CD4-positive, alpha-beta memory T cell (primary cell): ENCODE measurements at regions of chr19 and their contacts with region 1.

Region 1: DNA sequence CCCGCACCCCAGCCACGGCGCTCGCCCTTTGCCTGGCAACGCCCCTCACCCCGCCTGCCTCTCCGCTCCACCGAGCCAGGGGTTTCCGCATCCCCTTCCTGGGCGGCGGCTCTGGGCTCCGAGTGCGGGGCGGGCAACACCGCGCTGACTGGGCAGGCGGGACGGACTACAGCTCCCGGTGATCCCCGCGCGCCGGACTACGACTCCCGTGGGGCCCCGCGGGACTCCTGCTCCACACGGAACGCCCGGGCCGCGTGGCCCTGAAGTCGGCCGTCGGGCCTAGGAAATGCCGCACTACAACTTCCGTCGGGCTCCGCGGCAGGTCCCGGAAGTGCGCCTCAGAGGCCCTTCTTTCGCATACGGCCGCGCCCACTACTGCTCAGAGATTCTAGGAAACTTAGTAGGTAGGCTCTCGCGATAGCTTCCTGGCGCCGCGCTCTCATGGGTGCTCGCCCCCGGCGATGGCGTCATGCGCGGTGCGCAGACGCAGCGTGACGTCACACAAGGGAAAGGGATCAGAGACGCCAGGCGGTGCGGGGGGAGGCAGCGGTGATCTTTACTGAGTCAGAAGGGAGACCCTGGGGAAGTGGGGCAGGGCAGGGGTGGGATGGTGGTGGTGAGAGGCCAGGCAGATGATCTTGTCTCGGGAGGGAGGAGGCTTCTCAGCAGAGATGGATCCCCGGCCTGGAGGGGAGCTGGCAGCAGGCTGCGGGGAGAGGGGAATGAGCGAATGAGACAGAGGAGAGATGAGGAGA is at the start of gene JOSD2:
- DNase-seq: peak; percentile 94 to 99 (median 98)
- H3K4me3 ChIP-seq: peak within 1 kb of the TSS; percentile 61 to 83
- H3K4me3 Mint-ChIP-seq: peak within 1 kb of the TSS; percentile 89 to 97 (median 92)
- H3K27ac ChIP-seq: peak within 1 kb of the TSS; percentile 78
- H3K27ac Mint-ChIP-seq: peak within 1 kb of the TSS; percentile 97 to 99 (median 99)
- H3K4me1 ChIP-seq: peaks cover 13% of the 10 kb centered on the region
- H3K4me1 Mint-ChIP-seq: peaks cover 7 to 32% (median 20%) of the 10 kb centered on the region in 4 donors
- H3K27me3 ChIP-seq: no peaks in the 10 kb centered on the region
- H3K27me3 Mint-ChIP-seq: peaks cover 0 to 9% of the 10 kb centered on the region in 2 donors
- total RNA-seq, gene JOSD2: 29.5 to 35.8 TPM

Region 2: DNA sequence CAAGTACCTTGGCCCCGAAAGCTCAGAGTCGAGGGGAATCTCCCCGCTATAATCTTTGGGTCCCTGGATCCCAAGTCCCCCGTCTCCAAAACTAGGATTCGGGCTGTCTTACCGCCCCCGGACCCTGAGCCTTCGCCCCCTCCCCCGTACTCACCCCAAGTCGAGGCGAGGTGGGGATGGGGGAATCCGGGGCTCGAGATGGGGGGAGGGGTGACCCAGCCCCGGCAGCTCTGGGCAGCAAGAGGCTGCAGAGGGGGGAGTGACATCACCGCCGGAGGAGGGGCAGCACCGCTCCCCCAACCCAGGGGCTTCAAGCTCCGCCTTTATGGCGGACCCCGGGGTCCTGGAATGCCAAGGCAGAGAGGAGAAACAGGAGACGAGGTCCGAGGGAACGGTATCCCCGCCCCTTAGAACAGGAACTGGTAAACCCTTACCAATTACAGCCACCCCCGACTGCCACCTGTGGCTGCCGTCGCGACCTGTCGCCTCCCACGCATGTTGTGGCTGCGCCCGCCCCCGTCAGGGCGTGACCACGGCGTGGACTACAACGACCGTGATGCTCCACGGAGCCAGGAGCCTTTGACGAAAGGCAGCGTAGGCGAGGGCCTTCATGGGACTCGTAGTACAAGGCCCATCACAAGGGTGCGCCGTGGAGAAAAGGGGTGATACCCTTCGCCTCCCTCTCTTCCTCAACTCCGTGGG is 178.1 kb before region 1 on chr19:
- CTCF ChIA-PET with region 1: no interaction called
- POLR2A ChIA-PET with region 1: interaction called, 13 read pairs
- intact Hi-C with region 1: loop called (anchors 1 kb)
- DNase-seq: peak in 4 of 5 donors; percentile 88 to 94 (median 92)
- H3K4me3 ChIP-seq: peak overlapping the region; percentile 67 to 76
- H3K4me3 Mint-ChIP-seq: peak overlapping the region; percentile 82 to 97 (median 92)
- H3K27ac ChIP-seq: peak overlapping the region; percentile 3
- H3K27ac Mint-ChIP-seq: peak overlapping the region; percentile 69 to 98 (median 95)
- H3K4me1 ChIP-seq: peaks cover 51% of the 10 kb centered on the region
- H3K4me1 Mint-ChIP-seq: peaks cover 28 to 62% (median 41%) of the 10 kb centered on the region in 4 donors
- H3K27me3 ChIP-seq: peaks cover 17% of the 10 kb centered on the region
- H3K27me3 Mint-ChIP-seq: peaks cover 14 to 38% of the 10 kb centered on the region in 2 donors

Region 3: DNA sequence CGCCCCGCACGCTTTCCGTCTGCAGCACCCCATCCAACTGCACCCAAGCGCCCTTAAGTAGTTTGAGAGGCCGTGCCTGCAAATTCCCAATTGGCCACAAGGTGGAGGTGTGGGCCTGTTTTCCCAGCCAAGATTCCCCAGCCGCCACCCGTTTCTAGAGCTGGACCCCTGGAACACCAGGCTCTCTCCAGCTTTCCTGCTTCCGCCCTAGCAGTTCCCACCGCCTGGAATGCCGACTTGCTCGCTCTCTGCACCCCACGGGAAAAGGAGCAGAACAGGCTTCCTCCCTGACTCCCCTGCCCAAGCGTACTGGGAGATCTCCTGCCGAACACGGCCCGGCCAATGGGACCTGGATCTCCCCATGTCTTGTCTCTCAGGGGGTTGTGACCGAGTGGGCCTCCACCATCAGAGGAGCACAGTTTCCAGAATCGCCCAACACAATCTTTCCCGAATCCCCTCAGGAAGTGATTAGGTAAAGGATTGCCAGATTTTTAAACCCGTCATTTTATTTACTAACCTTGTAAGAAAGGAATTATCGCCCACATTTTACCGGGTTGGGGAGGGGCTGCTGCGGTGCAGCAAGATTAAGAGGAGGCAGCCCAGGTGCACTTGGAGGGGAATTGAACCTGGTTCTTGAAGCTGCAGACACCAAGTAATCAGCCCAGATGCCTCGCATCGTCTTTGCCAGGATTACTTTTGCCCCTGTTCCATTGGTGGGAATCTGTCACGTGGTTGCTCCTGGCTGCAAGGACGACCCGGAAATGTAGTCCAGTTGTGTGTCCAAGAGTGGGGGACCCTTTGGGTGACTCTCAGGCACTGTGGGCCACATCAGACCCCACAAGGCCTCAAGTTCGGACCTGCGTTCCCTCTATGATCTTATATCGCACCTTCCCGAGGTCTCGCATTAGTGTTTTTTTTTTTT is 142.3 kb before region 1 on chr19:
- CTCF ChIA-PET with region 1: interaction called, 5 read pairs
- POLR2A ChIA-PET with region 1: interaction called, 5 read pairs
- intact Hi-C with region 1: loop called (anchors 2 kb)
- DNase-seq: peak; percentile 71 to 78 (median 78)
- H3K4me3 ChIP-seq: peak overlapping the region; percentile 32 to 88
- H3K4me3 Mint-ChIP-seq: peak overlapping the region; percentile 85 to 97 (median 90)
- H3K27ac ChIP-seq: peak overlapping the region; percentile 56
- H3K27ac Mint-ChIP-seq: peak overlapping the region; percentile 62 to 96 (median 90)
- H3K4me1 ChIP-seq: peaks cover 26% of the 10 kb centered on the region
- H3K4me1 Mint-ChIP-seq: peaks cover 17 to 43% (median 28%) of the 10 kb centered on the region in 4 donors
- H3K27me3 ChIP-seq: no peaks in the 10 kb centered on the region
- H3K27me3 Mint-ChIP-seq: no peaks in the 10 kb centered on the region

Region 4: GRCh38 chr19:50376166-50377050 is 134.8 kb before region 1 on chr19 and contains the start of gene NR1H2:
- CTCF ChIA-PET with region 1: no interaction called
- POLR2A ChIA-PET with region 1: interaction called, 20 read pairs
- intact Hi-C with region 1: no loop called
- DNase-seq: peak; percentile 95 to 96 (median 96)
- H3K4me3 ChIP-seq: peak within 1 kb of the TSS; percentile 94 to 97
- H3K4me3 Mint-ChIP-seq: peak within 1 kb of the TSS; percentile 87 to 98 (median 96)
- H3K27ac ChIP-seq: peak within 1 kb of the TSS; percentile 100
- H3K27ac Mint-ChIP-seq: peak within 1 kb of the TSS; percentile 94 to 100 (median 100)
- H3K4me1 ChIP-seq: peaks cover 14% of the 10 kb centered on the region
- H3K4me1 Mint-ChIP-seq: peaks cover 7 to 26% (median 14%) of the 10 kb centered on the region in 4 donors
- H3K27me3 ChIP-seq: no peaks in the 10 kb centered on the region
- H3K27me3 Mint-ChIP-seq: no peaks in the 10 kb centered on the region
- total RNA-seq, gene NR1H2: 103 to 109 TPM

Region 5: DNA sequence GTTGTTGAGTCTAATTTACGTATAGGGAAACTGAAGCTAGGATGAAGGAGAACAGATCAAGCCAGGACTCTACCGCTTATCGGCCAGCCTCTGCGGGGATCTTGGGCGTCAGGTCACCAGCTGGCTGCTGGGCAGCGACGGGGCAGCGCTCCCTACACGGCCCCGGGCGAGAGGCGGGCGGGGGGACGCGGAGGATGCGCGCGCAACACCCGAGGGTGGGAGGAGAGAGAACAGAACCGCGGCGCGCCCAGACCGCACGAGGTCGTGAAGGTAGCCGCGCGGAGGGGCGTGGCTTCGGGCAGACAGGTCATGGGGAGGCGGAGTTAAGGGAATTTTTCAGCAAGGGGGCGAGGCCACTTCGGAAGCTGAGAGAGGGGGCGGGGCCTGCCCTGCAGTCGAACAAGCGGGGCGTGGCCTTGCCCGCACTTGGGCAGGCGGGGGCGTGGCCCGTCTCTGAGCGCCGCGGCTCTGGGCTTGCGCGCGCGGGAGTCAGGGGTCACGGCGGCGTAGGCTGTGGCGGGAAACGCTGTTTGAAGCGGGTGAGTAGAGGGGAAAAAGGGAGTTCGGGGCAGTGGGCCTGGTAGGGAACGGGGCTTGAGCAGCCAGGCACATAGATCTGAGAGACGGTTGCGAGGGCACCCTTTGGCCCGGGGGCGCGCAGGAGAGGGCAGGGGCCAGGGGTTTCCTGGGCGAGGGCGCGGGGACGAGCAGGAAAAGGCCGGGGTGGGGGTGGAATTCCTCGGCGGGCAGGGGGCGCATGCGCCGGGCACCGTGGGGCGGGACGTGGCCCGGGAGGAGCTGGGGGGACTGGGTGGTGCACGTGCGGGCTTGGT is 127.2 kb before region 1 on chr19 and contains the start of gene POLD1:
- CTCF ChIA-PET with region 1: no interaction called
- POLR2A ChIA-PET with region 1: interaction called, 13 read pairs
- intact Hi-C with region 1: loop called (anchors 2 kb)
- DNase-seq: peak; percentile 98 to 99 (median 99)
- H3K4me3 ChIP-seq: peak within 1 kb of the TSS; percentile 38 to 80
- H3K4me3 Mint-ChIP-seq: peak within 1 kb of the TSS; percentile 91 to 97 (median 94)
- H3K27ac ChIP-seq: peak within 1 kb of the TSS; percentile 67
- H3K27ac Mint-ChIP-seq: peak within 1 kb of the TSS; percentile 91 to 98 (median 94)
- H3K4me1 ChIP-seq: peaks cover 16% of the 10 kb centered on the region
- H3K4me1 Mint-ChIP-seq: peaks cover 22 to 39% (median 32%) of the 10 kb centered on the region in 4 donors
- H3K27me3 ChIP-seq: no peaks in the 10 kb centered on the region
- H3K27me3 Mint-ChIP-seq: no peaks in the 10 kb centered on the region
- total RNA-seq, gene POLD1: 40.4 to 41.1 TPM

Region 6: GRCh38 chr19:50476224-50476942 is 34.9 kb before region 1 on chr19 and contains the starts of genes EMC10 and GARIN5A:
- CTCF ChIA-PET with region 1: interaction called, 3 read pairs
- POLR2A ChIA-PET with region 1: interaction called, 9 read pairs
- intact Hi-C with region 1: loop called (anchors 1 kb)
- DNase-seq: peak; percentile 94 to 96 (median 95)
- H3K4me3 ChIP-seq: peak within 1 kb of the TSS; percentile 66 to 85
- H3K4me3 Mint-ChIP-seq: peak within 1 kb of the TSS; percentile 95 to 99 (median 98)
- H3K27ac ChIP-seq: peak within 1 kb of the TSS; percentile 89
- H3K27ac Mint-ChIP-seq: peak within 1 kb of the TSS; percentile 94 to 98 (median 97)
- H3K4me1 ChIP-seq: peaks cover 25% of the 10 kb centered on the region
- H3K4me1 Mint-ChIP-seq: peaks cover 13 to 33% (median 24%) of the 10 kb centered on the region in 4 donors
- H3K27me3 ChIP-seq: no peaks in the 10 kb centered on the region
- H3K27me3 Mint-ChIP-seq: no peaks in the 10 kb centered on the region
- total RNA-seq, gene EMC10: 83.7 to 92.6 TPM
- total RNA-seq, gene GARIN5A: 0.61 TPM in 1 of 2 experiments, not detected in the other

Region 7: GRCh38 chr19:50522881-50523280 is 11.6 kb after region 1 on chr19:
- CTCF ChIA-PET with region 1: no interaction called
- POLR2A ChIA-PET with region 1: no interaction called
- intact Hi-C with region 1: no loop called
- DNase-seq: no peak
- H3K4me3 ChIP-seq: no peak overlapping the region
- H3K4me3 Mint-ChIP-seq: no peak overlapping the region
- H3K27ac ChIP-seq: no peak overlapping the region
- H3K27ac Mint-ChIP-seq: no peak overlapping the region
- H3K4me1 ChIP-seq: no peaks in the 10 kb centered on the region
- H3K4me1 Mint-ChIP-seq: no peaks in the 10 kb centered on the region
- H3K27me3 ChIP-seq: no peaks in the 10 kb centered on the region
- H3K27me3 Mint-ChIP-seq: no peaks in the 10 kb centered on the region

Region 8: DNA sequence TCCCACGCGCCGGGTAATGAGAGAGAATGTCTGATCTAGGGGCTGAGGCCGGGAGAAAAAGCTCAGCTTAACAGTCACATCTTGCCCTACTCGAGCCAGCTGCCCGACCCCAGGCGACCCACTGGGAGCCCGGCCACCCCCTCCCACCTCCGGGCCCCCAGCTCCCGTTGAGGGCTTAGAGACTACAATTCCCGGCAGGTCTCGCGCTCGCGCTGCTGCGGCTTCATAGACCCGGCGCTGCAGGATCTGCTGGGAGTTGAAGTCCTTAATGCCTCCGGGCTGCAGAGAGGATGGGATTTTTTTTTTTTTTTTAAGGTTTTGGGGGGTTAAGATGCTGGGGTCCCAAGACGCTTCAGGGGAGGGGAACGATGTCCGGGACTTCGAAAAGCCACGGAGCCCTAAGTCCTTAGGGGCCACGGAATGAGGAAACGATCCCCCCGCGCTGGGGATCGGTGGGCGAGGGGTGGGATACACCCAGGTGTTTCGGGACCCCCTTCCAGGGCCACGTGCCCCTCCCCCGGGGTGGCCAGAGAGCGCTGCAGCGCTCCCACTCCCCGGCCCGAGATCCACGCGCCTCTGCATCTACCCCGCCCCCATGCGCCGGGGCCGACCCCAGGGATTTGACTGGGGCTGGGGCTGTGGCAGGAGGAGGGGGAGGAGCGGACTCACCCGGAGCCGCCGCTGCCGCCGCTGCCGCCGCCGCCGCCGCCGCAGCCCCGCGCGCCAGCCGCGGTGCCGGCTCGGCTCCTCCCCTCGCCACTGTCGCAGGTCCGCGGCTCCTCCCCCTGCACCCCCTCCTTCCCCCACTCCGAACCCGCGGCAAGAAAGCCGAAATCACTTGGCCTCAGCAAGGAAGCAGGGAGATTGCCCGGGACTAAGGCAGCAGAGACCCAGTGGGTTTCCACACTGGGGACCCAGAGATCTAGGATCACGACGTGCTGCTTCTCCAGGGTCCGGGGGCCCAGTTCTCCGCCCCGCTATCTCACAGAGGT is 128.2 kb after region 1 on chr19 and contains the start of gene SYT3:
- CTCF ChIA-PET with region 1: no interaction called
- POLR2A ChIA-PET with region 1: no interaction called
- intact Hi-C with region 1: no loop called
- DNase-seq: peak in 1 of 5 donors; percentile 23
- H3K4me3 ChIP-seq: no peak within 1 kb of the TSS
- H3K4me3 Mint-ChIP-seq: peak within 1 kb of the TSS; percentile 55 to 83 (median 74)
- H3K27ac ChIP-seq: no peak within 1 kb of the TSS
- H3K27ac Mint-ChIP-seq: peak within 1 kb of the TSS in 1 of 7 donors; percentile 57
- H3K4me1 ChIP-seq: no peaks in the 10 kb centered on the region
- H3K4me1 Mint-ChIP-seq: peaks cover 0 to 12% (median 3%) of the 10 kb centered on the region in 4 donors
- H3K27me3 ChIP-seq: peaks cover 20% of the 10 kb centered on the region
- H3K27me3 Mint-ChIP-seq: peaks cover 47 to 48% of the 10 kb centered on the region in 2 donors
- total RNA-seq, gene SYT3: not detected

Region 9: GRCh38 chr19:50804420-50805272 is 293.4 kb after region 1 on chr19:
- CTCF ChIA-PET with region 1: no interaction called
- POLR2A ChIA-PET with region 1: interaction called, 14 read pairs
- intact Hi-C with region 1: loop called (anchors 1 kb)
- DNase-seq: peak; percentile 98 to 99 (median 98)
- H3K4me3 ChIP-seq: peak overlapping the region; percentile 66 to 70
- H3K4me3 Mint-ChIP-seq: peak overlapping the region; percentile 95 to 100 (median 100)
- H3K27ac ChIP-seq: peak overlapping the region; percentile 93
- H3K27ac Mint-ChIP-seq: peak overlapping the region; percentile 99 to 100 (median 100)
- H3K4me1 ChIP-seq: peaks cover 27% of the 10 kb centered on the region
- H3K4me1 Mint-ChIP-seq: peaks cover 24 to 50% (median 40%) of the 10 kb centered on the region in 4 donors
- H3K27me3 ChIP-seq: no peaks in the 10 kb centered on the region
- H3K27me3 Mint-ChIP-seq: no peaks in the 10 kb centered on the region